ENCODE measurements at regions of chr9 and their contacts with region 1.

Region 1: DNA sequence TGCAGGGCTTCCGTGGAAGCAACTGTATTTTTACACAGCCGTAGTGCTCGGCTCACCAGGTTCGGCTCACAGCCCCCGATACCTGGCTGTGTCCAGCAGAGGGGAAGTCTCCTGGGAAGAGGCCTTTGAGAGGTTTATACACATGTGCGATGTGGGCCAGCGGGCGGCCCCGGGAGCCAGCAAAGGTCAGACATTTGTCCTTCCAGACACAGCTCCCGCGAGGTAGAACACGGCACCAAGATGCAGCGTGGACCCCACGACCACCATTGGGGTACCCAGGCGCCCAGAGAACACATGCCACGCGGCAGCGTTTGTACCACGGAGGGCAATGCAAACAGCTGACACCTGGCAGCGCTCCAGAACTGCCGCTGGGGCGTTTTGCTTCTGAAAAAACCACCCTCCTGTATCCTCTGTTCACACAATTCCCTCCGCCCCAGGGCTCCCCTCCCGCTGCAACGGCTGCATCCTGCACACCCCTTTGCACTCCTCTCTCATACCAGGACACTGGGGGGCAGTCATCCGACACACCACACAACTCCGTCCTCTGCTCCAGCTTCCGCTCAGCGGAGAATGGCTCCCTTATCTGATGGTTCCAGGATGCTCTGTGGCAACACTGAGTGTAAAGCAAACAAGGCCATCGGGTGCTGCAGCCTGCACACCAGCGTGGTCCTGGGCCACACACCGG is 235.3 kb downstream of the SYK start:
- DNase-seq: peak; percentile 69
- H3K4me3 Mint-ChIP-seq: peak overlapping the region; percentile 35
- H3K27ac Mint-ChIP-seq: peak overlapping the region; percentile 70
- H3K4me1 Mint-ChIP-seq: peaks cover 61% of the 10 kb centered on the region
- H3K27me3 Mint-ChIP-seq: peaks cover 3% of the 10 kb centered on the region

Region 2: DNA sequence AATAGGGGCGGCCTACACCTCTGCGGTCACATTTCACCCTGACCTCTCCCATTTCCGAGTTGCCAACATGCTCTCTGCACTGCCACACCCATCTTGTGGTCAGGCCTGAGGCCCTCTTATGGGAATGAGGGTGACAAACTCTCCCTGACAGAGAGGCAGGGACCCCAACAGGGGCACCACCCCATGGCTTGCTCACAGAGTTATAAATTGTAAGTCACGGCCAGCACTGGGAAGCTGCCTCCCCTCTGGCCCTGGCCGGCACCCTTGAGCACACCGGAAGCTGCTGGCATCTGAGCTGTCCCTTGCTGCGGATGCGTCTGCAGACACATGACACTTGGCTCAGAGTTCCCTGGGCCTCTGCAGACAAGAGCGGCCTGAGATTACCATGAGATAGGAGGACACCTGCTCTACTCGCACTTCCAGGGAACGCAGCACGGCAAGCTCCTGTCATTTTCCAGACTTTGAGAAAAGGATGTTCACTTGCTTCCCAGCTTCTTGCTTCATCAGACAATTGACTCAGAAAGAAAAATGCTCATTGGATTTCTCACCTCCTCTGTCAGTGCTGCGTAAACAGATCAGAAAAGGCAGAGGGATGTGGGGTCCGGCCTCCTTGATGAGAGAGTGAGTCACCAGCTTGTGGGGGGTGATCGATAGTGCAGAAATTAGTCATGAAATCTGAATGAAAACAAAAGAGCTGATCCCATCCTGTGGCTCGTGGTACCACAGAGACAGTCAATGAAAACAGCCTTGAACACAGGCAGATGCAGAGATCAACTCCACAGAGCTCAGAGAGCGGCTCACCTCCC is 34.4 kb after region 1 on chr9:
- intact Hi-C with region 1: loop called (anchors 1 kb)
- DNase-seq: peak; percentile 35
- H3K4me3 Mint-ChIP-seq: peak overlapping the region; percentile 68
- H3K27ac Mint-ChIP-seq: peak overlapping the region; percentile 96
- H3K4me1 Mint-ChIP-seq: peaks cover 17% of the 10 kb centered on the region
- H3K27me3 Mint-ChIP-seq: peaks cover 2% of the 10 kb centered on the region

Region 3: DNA sequence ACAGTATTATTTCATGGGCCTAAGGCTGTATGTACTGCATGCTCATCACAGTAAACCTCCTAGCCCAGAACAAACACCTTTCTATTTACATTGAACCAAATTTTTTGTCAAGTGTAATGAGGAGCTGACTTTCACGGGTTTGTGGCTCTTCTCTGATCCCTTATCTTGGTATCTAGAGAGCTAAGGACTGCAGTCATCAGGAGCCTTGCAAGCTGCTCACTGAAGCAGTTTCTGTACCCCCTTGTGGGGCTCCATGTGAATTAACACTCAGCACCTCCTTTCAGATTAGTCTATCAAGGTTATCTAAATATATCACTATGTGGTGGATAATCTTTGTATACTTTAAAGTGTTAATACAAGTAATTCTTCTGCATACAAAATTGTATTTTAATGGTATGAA is 216.5 kb after region 1 on chr9:
- intact Hi-C with region 1: loop called (anchors 1 kb)
- DNase-seq: peak; percentile 51
- H3K4me3 Mint-ChIP-seq: no peak overlapping the region
- H3K27ac Mint-ChIP-seq: no peak overlapping the region
- H3K4me1 Mint-ChIP-seq: peaks cover 62% of the 10 kb centered on the region
- H3K27me3 Mint-ChIP-seq: no peaks in the 10 kb centered on the region

Region 4: DNA sequence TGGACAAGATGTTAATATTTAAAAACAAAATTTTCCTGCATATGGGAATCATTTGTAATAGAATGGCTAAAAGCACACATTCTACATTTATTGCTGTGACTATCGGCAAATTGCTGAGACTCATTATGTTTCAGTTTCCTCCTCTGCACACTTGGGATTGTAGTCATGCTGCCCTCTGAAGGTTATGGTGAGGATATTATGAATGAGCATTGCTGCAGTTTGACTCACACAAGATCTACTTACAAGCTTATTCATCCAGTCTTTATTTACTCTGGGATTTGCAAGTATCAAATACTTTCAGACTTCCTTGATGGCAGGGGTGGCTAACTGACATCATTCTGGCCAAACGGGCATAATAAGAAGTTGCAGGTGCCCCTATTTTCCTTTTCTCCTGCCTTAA is 396.2 kb after region 1 on chr9:
- intact Hi-C with region 1: loop called (anchors 1 kb)
- DNase-seq: no peak
- H3K4me3 Mint-ChIP-seq: no peak overlapping the region
- H3K27ac Mint-ChIP-seq: no peak overlapping the region
- H3K4me1 Mint-ChIP-seq: peaks cover 28% of the 10 kb centered on the region
- H3K27me3 Mint-ChIP-seq: peaks cover 20% of the 10 kb centered on the region

Region 5: DNA sequence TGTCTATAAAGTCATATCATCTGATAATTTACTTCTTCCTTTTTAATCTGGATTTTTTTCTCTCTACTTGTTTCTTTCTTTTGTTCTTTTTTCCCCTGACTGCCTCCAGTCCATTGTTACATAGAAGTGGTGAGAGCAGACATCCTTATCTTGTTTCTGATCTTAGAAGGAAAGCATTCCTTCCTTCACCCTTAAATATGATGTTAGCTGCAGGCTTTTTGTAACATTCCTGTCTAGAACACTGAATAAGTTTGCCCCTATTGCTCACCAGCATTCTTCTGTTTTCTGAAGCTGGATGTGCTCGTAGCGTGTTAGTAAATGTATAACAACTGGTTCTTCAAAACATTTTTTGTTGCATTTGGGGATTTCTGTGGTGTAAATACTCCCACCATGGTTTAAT is 523.3 kb after region 1 on chr9:
- intact Hi-C with region 1: no loop called
- DNase-seq: no peak
- H3K4me3 Mint-ChIP-seq: no peak overlapping the region
- H3K27ac Mint-ChIP-seq: no peak overlapping the region
- H3K4me1 Mint-ChIP-seq: no peaks in the 10 kb centered on the region
- H3K27me3 Mint-ChIP-seq: peaks cover 22% of the 10 kb centered on the region

Region 6: DNA sequence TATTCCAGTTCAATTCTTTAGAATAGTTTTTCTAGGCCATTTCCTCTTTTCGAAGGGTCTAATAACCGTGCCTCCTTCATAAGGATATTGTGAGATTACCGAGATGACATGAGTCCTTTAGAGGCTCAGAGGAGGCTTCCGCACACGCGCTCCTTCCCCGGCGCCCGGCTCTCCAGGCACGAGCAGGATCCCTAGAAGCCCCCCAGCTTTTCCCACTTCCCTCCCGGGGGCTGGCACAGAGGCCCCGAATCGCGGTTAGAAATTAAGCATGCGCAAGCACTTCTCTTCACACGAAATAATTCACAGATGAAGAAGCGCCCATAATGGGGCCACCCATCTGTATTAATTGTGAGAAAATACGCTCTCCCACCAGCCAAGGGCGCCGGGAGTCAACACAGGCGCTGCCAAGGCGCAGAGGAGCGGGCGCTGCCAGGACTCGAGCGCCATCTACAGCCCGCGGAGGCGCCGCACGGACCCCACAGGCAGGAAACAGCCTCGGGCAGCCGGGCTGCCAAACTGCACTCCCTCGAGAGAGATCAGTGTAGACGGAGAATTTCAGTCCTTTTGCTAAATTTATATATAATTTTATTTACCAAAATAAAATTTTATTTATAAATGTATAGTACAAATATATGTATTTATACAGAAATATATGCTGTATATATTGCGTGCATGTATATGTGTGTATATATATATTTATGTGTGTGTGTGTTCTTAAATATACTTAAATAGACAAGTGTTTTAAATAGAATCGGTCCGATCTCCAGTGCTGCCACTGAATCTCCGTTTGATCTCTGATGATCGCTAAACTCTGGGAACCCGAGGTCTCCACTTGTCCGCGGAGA is 644.7 kb after region 1 on chr9:
- intact Hi-C with region 1: loop called (anchors 1 kb)
- DNase-seq: peak; percentile 57
- H3K4me3 Mint-ChIP-seq: peak overlapping the region; percentile 53
- H3K27ac Mint-ChIP-seq: no peak overlapping the region
- H3K4me1 Mint-ChIP-seq: peaks cover 5% of the 10 kb centered on the region
- H3K27me3 Mint-ChIP-seq: peaks cover 27% of the 10 kb centered on the region

Region 7: GRCh38 chr9:91711755-91712601 is 675.0 kb after region 1 on chr9:
- intact Hi-C with region 1: loop called (anchors 5 kb)
- DNase-seq: peak; percentile 67
- H3K4me3 Mint-ChIP-seq: no peak overlapping the region
- H3K27ac Mint-ChIP-seq: no peak overlapping the region
- H3K4me1 Mint-ChIP-seq: no peaks in the 10 kb centered on the region
- H3K27me3 Mint-ChIP-seq: peaks cover 9% of the 10 kb centered on the region

Region 8: DNA sequence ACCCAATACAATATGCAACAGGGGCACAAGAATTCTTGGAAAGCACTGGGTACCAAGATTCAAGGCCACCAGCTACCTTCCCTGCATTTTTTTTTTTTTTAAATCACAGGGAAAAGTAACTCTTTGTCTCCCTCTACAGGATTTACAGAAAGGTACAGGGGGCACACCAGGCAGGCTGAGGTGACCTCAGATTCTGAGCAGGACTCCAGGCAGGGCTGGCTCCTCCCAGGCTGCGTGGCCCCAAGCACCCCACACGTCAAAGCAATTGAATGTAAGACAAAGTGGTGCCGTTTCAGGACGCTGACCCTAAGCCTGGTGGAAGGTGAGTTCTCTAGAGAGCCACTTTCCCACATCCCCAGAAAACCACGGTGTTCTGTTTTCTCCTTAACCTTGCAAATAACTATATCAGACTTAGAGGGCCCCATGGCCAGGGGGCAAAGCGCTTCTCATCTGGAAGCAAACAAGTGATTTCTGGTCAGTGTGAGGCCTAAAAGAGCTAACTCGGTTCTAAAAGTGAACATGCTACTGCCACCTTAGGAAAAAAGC is 690.4 kb after region 1 on chr9:
- intact Hi-C with region 1: loop called (anchors 5 kb)
- DNase-seq: peak; percentile 12
- H3K4me3 Mint-ChIP-seq: no peak overlapping the region
- H3K27ac Mint-ChIP-seq: no peak overlapping the region
- H3K4me1 Mint-ChIP-seq: peaks cover 8% of the 10 kb centered on the region
- H3K27me3 Mint-ChIP-seq: no peaks in the 10 kb centered on the region

Measured in activated T-helper 1 cell treated with anti-CD3 and anti-CD28 coated beads, Interleukin-12 subunit alpha, Interleukin-12 subunit beta, Interleukin-2, Interleukin-4 antibody, amounts not matched to agents 30 ng/mL and 10 ng/mL and 1 ng/mL, durations not matched to agents 14 hours and 24 hours and 36 hours (primary cell).